Activated CD8-positive, alpha-beta memory T cell treated with anti-CD3 and anti-CD28 coated beads, Interleukin-2, amount 10 ng/mL, durations not matched to agents 7 days and 5 days (primary cell): ENCODE measurements at regions of chr16 and their contacts with region 1.

Region 1: DNA sequence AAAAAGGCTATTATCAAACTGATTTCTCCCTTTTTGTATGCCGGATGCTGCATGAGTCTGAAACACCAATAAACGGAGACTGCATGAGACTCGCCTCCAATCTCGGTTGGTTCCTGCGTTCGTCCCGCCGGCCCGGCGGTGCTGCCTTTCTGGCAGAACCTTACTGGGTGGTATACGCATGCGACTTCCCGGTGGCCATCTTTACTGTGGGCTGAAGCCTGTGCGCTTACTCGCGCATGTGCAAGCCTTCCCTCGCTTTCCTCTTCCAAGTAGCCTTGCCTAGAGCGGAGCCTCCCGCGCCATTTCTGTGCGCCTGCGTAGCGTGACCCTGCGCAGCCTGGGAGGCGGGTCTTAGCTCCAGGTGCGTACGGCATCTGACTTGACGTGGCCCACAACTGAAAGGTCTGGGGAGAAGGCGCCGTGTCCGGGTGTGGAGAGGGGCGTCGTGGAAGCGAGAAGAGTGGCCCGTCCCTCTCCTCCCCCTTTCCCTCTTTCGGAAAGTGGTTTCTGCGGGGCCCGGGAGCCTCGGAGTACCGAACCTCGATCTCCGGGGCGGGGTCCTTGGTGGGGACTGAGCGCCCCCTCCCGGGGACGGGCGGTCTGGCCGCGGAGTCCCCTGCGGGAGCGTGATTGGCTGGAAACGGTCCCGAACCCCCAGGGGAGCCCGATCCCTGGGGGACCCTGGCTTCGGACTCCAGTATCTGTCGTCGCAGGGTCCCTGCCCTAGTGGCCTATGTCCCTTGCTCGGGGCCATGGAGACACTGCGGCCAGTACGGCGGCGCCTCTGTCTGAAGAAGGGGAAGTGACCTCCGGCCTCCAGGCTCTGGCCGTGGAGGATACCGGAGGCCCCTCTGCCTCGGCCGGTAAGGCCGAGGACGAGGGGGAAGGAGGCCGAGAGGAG is at the start of gene PAGR1:
- DNase-seq: peak; percentile 99
- ATAC-seq: peak; percentile 79
- H3K4me3 Mint-ChIP-seq: peak within 1 kb of the TSS; percentile 99
- H3K27ac Mint-ChIP-seq: peak within 1 kb of the TSS; percentile 88
- H3K4me1 Mint-ChIP-seq: peaks cover 65% of the 10 kb centered on the region
- H3K27me3 Mint-ChIP-seq: peaks cover 12% of the 10 kb centered on the region
- total RNA-seq, gene PAGR1: 34.3 to 35.2 TPM

Region 2: GRCh38 chr16:29720699-29721098 is 95.3 kb before region 1 on chr16:
- CTCF ChIA-PET with region 1: no interaction called
- DNase-seq: no peak
- ATAC-seq: no peak
- H3K4me3 Mint-ChIP-seq: no peak overlapping the region
- H3K27ac Mint-ChIP-seq: no peak overlapping the region
- H3K4me1 Mint-ChIP-seq: peaks cover 8% of the 10 kb centered on the region
- H3K27me3 Mint-ChIP-seq: no peaks in the 10 kb centered on the region

Region 3: DNA sequence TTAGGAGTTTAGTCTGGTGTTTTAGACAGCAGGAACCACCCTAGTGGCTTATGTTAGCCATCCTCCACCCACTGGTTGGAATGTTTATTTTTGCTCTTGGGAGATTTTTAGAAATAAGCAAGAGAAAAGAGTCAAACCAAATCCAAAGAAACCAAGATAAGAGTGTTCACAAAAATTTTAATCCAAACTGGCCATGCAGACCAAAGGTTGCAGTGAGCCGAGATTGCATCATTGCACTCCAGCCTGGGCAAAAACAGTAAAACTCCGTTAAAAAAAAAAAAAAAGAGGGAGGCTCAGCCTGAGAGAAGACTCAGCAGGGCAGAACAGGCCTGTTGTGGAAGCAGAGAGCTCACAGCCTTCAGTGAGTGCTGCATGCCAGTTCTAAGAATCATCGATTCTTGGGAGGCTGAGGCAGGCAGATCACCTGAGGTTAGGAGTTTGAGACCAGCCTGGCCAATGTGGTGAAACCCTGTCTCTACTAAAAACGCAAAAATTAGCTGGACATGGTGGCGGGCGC is 58.0 kb before region 1 on chr16:
- CTCF ChIA-PET with region 1: no interaction called
- DNase-seq: no peak
- ATAC-seq: no peak
- H3K4me3 Mint-ChIP-seq: no peak overlapping the region
- H3K27ac Mint-ChIP-seq: no peak overlapping the region
- H3K4me1 Mint-ChIP-seq: peaks cover 14% of the 10 kb centered on the region
- H3K27me3 Mint-ChIP-seq: peaks cover 2% of the 10 kb centered on the region

Region 4: GRCh38 chr16:29805378-29806098 is 10.5 kb before region 1 on chr16:
- CTCF ChIA-PET with region 1: interaction called, 87 read pairs
- DNase-seq: peak; percentile 99
- ATAC-seq: peak; percentile 70
- H3K4me3 Mint-ChIP-seq: peak overlapping the region; percentile 94
- H3K27ac Mint-ChIP-seq: peak overlapping the region; percentile 96
- H3K4me1 Mint-ChIP-seq: peaks cover 44% of the 10 kb centered on the region
- H3K27me3 Mint-ChIP-seq: no peaks in the 10 kb centered on the region

Region 5: GRCh38 chr16:29868396-29869009 is 52.5 kb after region 1 on chr16:
- CTCF ChIA-PET with region 1: no interaction called
- DNase-seq: no peak
- ATAC-seq: no peak
- H3K4me3 Mint-ChIP-seq: no peak overlapping the region
- H3K27ac Mint-ChIP-seq: no peak overlapping the region
- H3K4me1 Mint-ChIP-seq: peaks cover 8% of the 10 kb centered on the region
- H3K27me3 Mint-ChIP-seq: peaks cover 2% of the 10 kb centered on the region

Region 6: GRCh38 chr16:29951625-29952365 is 135.8 kb after region 1 on chr16:
- CTCF ChIA-PET with region 1: no interaction called
- DNase-seq: no peak
- ATAC-seq: peak; percentile 16
- H3K4me3 Mint-ChIP-seq: no peak overlapping the region
- H3K27ac Mint-ChIP-seq: no peak overlapping the region
- H3K4me1 Mint-ChIP-seq: no peaks in the 10 kb centered on the region
- H3K27me3 Mint-ChIP-seq: peaks cover 8% of the 10 kb centered on the region